ENCODE measurements at regions of chr15 and their contacts with region 1.

Region 1: DNA sequence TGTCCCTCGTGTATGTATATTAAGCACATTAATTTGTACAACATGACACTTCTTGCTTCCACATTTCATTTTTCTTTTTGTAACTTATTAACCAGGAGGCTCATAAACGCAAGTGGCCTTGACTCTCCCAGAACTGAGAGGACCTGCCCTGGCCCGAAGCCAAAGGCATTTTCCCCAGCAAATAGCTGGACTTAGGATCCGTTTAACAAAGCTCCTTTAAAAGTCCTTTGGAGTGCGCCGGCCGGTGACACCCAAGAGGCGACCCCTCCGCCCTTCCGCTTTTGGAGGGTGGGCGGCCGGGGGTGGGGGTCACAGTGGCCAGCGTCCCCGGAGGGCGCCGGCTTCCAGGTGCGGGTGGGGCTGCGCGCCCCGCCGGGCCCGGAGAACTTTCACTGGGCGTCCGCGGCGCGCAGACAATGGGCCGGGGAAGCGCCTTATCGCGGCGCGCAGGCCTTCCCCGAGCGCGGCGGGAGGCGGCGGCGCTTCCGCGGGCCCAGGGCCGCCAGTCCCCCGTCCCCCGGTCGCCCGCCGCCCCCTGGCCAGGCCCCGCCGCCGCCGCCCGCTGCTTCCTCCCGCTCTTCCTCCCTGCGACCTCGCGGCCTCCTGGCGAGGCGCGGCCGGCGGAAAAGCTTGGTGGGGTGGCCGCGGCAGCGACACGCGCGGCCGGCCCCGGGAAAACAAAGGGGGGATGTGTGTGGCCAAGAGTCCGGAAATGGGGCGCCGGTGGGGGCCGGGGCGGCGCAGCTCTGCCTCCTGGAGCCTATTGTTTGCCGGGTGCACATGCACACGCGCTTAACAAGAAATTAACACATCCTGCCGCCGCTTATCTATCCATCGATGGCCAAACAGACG is 613.4 kb downstream of the MCTP2 start:
- DNase-seq: peak; percentile 98
- H3K4me3 ChIP-seq: peak overlapping the region in 1 of 3 experiments; percentile 31
- H3K27ac ChIP-seq: peak overlapping the region; percentile 100
- H3K4me1 ChIP-seq: peaks cover 60% of the 10 kb centered on the region
- H3K27me3 ChIP-seq: no peaks in the 10 kb centered on the region
- CTCF ChIP-seq: peak in 1 of 2 donors; percentile 36
- POLR2A ChIP-seq: peak; percentile 62

Region 2: GRCh38 chr15:94607176-94607654 is 237.5 kb before region 1 on chr15:
- CTCF ChIA-PET with region 1: interaction called, 7 read pairs
- POLR2A ChIA-PET with region 1: interaction called, 5 read pairs
- dilution Hi-C with region 1: no loop called
- intact Hi-C with region 1: loop called (anchors 1 kb)
- DNase-seq: peak; percentile 96
- H3K4me3 ChIP-seq: no peak overlapping the region
- H3K27ac ChIP-seq: peak overlapping the region; percentile 97
- H3K4me1 ChIP-seq: peaks cover 40% of the 10 kb centered on the region
- H3K27me3 ChIP-seq: no peaks in the 10 kb centered on the region
- CTCF ChIP-seq: no peak
- POLR2A ChIP-seq: peak; percentile 75

Region 3: GRCh38 chr15:94965593-94965992 is 120.8 kb after region 1 on chr15:
- CTCF ChIA-PET with region 1: interaction called, 3 read pairs
- POLR2A ChIA-PET with region 1: no interaction called
- dilution Hi-C with region 1: no loop called
- intact Hi-C with region 1: loop called (anchors 2 kb)
- DNase-seq: peak; percentile 27
- H3K4me3 ChIP-seq: no peak overlapping the region
- H3K27ac ChIP-seq: peak overlapping the region; percentile 21
- H3K4me1 ChIP-seq: peaks cover 12% of the 10 kb centered on the region
- H3K27me3 ChIP-seq: no peaks in the 10 kb centered on the region
- CTCF ChIP-seq: no peak
- POLR2A ChIP-seq: no peak

Region 4: DNA sequence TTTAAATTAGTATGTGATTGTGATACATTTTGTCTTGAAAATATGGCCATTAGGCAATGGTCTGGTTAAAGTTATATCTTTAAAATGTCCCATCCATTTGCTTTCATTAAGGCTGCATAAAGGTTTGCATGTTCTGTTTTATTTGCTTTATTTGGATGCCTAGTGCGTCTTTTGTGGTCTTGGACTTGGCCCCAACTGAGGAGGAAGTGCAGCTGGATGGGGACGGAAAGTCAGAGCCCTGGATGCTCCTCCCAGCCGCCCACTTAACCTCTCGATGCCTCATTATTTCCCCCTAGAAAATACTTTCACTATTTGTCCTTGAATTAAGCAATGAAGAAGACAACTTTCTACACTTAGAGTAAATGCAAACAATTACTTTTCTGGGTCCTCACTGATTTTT is 284.8 kb after region 1 on chr15:
- CTCF ChIA-PET with region 1: interaction called, 3 read pairs
- POLR2A ChIA-PET with region 1: no interaction called
- dilution Hi-C with region 1: no loop called
- intact Hi-C with region 1: loop called (anchors 5 kb)
- DNase-seq: peak; percentile 16
- H3K4me3 ChIP-seq: no peak overlapping the region
- H3K27ac ChIP-seq: no peak overlapping the region
- H3K4me1 ChIP-seq: peaks cover 28% of the 10 kb centered on the region
- H3K27me3 ChIP-seq: no peaks in the 10 kb centered on the region
- CTCF ChIP-seq: no peak
- POLR2A ChIP-seq: no peak

Region 5: DNA sequence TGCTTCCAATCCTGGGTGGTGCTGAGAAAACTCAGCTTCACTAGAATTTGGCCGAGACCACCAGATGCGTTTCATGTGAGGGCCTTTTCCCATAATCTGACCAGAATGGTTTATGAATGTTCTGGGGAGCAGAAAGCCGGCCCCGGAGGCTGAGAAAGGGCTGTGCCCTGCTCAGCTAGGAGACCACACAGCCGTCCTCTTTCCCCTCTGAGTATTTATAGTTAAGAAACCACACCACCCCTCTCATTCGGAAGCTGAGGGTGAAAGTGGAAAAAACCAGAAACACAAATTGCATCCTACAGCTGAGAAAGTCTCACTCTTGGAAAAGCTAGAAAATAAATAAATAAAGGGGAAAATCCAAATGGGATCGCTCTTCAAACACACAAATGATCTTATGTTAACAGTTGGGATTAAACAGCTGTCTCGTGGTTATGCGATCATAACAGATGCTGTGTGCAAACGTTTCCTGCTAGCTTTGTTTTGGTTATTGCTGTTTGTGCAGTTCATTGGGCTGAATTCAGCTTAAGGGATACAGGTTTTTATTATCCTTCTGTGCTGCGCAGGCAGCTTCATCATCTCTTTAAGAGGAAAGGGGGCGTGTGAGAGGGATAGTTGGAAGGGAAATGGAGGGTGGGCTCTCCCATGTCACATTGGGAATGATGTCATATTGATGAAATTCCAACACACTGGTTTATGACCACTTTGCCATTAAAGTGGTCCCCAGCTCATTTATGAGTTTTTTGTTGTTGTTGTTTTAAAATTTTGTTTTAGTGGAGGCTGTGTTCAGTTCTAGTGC is 459.6 kb after region 1 on chr15:
- CTCF ChIA-PET with region 1: no interaction called
- POLR2A ChIA-PET with region 1: no interaction called
- dilution Hi-C with region 1: no loop called
- intact Hi-C with region 1: loop called (anchors 1 kb)
- DNase-seq: peak; percentile 98
- H3K4me3 ChIP-seq: no peak overlapping the region
- H3K27ac ChIP-seq: peak overlapping the region; percentile 97
- H3K4me1 ChIP-seq: peaks cover 52% of the 10 kb centered on the region
- H3K27me3 ChIP-seq: no peaks in the 10 kb centered on the region
- CTCF ChIP-seq: no peak
- POLR2A ChIP-seq: no peak

Region 6: DNA sequence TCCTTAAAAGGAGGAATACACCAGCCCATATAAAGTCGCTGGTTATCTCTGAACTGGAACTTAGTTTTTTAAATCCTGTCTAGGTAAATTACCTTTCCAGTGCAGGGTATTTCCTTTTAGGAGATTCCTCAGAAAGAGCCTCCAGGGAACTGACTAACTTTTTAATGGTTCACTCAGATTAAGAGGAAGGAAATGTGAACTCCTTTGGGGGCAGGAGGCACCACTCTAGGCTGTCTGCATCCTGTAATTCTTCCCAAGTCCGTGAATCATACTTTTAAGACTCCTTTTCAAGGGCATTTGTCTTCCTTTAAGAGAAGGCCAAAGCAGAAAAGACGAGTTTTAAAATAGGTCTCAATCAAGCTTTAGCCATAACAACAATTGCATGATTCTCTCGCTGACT is 614.5 kb after region 1 on chr15:
- CTCF ChIA-PET with region 1: no interaction called
- POLR2A ChIA-PET with region 1: no interaction called
- dilution Hi-C with region 1: no loop called
- intact Hi-C with region 1: loop called (anchors 10 kb)
- DNase-seq: peak; percentile 90
- H3K4me3 ChIP-seq: peak overlapping the region in 1 of 3 experiments; percentile 51
- H3K27ac ChIP-seq: peak overlapping the region; percentile 85
- H3K4me1 ChIP-seq: peaks cover 41% of the 10 kb centered on the region
- H3K27me3 ChIP-seq: no peaks in the 10 kb centered on the region
- CTCF ChIP-seq: no peak
- POLR2A ChIP-seq: peak; percentile 65

Region 7: DNA sequence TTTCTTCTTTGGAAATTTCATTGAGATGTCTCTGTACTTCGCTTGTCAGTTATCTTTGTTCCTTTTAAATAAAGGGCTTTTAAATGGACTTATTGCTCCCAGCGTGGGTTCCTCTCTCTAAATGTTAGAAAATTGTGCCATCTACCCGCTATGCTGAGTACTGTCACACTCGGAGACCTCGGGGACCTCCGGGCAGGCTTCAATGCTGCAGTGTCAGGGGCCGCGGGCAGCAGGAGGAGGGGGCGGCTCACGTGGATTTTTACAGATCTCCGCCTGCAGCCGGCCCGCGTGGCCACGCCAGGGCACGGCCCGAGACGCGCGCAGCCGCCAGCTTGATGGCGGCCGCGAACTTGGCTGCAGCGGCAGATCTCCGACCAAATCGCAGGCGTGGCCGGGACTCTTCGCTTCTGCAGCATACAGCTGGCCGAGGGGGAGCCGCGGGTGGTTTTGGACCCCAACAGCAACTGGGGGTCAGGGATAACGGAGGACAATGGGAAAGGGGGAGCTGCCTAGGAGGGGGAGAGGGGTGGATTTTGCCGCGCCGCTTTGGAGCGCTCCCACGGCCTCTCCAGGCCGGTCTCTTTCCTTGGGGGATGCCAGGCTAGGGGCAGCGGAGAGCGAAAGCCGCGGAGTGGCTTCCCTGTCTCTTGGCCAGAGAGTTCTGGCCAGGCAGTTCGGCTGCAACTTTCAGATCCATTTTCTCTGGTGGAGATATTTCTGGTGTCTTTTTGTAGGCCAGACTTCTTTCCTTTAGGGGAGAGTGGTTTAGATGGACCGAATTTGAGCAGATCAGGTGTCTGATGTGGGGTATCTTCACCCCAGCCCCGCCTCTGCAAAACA is 1501.0 kb after region 1 on chr15:
- CTCF ChIA-PET with region 1: no interaction called
- POLR2A ChIA-PET with region 1: no interaction called
- dilution Hi-C with region 1: no loop called
- intact Hi-C with region 1: loop called (anchors 5 kb)
- DNase-seq: peak; percentile 86
- H3K4me3 ChIP-seq: peak overlapping the region; percentile 16 to 99 (median 74)
- H3K27ac ChIP-seq: peak overlapping the region; percentile 87
- H3K4me1 ChIP-seq: peaks cover 83% of the 10 kb centered on the region
- H3K27me3 ChIP-seq: no peaks in the 10 kb centered on the region
- CTCF ChIP-seq: peak; percentile 22 to 33
- POLR2A ChIP-seq: no peak